Left colon (tissue), 2 donors: ENCODE measurements at regions of chr9 and their contacts with region 1.

Region 1: DNA sequence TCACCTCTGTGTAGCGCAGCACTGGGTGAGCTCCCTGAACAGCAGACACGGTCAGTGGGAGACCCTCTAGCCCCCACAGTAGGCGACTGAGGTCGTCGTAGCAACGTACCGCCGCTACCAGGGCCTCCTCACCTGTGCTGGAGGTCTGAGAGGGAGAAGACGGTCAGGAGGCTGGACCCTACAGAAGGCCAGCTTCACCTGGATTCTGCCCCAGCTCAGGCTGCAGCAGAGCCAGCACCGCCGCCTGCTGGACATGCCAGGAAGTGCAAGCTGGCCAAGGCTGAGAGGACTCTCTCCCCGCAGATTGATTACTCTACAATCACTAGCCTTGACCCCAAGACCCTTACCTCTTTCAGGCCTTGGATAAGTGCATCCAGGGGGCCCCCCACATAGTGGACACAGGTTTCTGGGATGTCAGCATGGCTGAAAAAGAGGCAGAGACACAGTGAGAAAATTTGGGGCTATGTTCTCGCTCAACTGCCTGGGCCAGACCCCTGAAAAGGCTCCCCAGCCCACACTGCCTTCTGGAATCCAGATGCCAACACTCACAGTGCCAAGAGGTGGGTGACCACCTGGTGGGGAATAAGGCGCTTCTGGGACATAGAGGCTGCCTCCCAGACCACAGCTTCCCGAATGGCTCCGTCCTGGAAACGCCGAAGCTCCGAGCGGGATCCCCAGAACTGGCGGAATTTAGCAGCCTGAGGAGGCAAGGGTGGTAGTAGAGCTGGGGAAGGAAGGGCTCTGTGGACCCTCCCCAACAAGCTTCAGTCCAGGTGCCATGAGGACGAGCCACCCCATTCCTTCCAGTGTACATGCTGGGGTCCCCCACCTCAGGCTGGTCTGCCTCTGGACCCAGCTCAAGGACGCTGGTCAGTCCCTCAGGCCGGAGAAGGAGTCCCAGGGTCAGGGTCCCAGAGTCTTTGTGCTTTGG is 6.9 kb downstream of the NOL6 start:
- DNase-seq: peak; percentile 39 to 79
- ATAC-seq: peak; percentile 82

Region 2: DNA sequence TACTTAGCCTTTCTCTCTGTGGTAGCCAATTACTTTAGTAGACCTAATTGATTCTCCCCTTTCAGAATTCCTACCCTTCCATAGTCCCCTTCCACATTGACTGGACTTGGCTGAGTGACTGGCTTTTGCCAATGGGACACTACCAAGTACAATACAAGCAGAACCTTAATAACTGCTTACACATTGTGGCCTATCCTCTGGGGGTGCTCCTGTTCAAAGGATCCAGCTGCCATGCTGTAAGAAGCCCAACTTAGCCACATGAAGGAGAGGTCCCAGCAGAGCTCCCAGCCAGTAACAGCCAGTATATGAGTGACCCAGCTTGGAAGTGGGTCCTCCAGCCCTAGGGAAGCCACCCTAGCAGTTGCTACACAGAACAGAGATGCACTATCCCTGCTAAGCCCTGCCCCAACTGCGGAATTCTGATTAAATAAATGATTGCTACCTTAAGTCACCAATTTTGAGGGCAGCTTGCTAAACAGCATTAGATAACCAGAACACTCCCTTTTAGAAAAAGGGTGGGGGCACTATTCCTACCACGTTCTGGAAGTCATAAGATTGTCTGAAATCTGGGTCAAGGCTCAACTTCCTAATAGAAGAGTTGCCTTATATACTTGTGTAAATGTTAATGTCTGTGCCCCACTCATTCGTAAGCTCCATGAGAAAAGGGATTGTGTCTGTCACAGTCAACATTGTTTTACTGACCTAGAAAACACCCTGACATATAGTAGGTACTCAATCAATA is 454.3 kb before region 1 on chr9:
- intact Hi-C with region 1: no loop called
- DNase-seq: no peak
- ATAC-seq: no peak

Region 3: DNA sequence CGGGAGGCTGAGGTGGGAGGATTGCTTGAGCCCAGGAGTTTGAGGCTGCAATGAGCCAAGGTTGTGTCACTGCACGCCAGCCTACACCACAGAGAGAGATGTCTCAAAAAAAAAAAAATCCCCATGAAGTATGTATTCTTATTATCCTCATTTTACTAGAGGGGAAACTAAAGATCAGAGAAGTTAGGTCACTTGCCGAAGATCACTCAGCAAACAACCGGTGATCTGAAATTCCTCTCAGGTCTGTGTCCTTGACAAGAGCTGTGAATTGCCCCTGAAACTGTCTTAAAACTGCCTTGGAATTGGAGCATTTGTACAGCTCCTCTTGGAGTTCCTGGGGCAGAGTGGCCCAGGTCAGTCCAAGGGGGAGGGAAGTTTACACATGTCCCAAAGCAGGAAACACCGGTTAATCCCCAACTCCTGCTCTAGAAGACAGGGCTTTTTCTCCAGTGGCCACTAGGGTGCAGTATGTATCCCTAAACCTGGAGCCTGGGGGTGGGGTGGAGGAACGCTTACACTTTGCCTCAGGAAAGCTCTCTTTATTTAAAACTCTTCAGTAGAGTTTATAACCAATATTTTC is 92.1 kb before region 1 on chr9:
- intact Hi-C with region 1: loop called in 1 of 2 experiments (anchors 10 kb)
- DNase-seq: peak; percentile 63 to 83
- ATAC-seq: peak; percentile 90

Region 4: GRCh38 chr9:33415501-33416038 is 51.3 kb before region 1 on chr9:
- intact Hi-C with region 1: loop called in 1 of 2 experiments (anchors 10 kb)
- DNase-seq: peak; percentile 92 to 94
- ATAC-seq: peak; percentile 92

Region 5: GRCh38 chr9:33659921-33660320 is 193.1 kb after region 1 on chr9:
- intact Hi-C with region 1: no loop called
- DNase-seq: no peak
- ATAC-seq: no peak